PC-9 (cell line): ENCODE measurements at regions of chr6 and their contacts with region 1.

Region 1: DNA sequence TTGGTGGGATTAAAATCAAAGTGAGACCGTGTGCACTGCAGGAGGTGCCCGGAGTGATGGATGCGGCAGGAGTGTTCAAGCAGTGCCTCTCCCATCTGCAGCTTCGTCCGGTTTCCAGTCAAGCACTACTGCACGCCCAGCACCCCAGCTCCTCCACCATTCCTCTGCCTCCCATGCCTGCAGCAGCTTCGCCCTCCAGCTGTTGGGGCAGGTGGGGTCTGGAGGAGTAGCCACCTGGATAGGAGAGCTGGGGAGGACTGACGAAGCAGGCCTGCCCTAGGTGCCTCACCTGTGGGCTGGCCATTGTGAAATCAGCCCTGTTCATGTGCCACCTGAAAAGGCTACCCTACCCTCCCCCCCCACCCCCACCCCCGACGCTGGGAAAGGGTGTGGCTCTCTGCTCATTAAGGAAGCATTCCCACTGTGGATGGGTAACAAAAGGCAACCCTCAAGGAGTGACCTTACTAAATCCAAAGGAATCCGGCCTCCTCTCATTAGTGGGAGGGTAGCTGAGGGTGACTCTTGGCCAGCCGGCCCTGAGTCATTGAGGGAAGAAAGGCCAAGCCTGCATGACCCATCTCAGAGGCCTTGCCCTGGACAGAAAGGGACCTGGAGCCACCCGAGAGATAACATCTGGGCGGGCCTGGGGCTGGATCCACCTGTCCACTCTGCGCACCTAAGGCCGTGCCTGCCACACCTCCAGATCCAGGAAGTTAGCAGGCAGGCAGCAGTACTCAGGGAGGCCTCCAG is 115.9 kb upstream of the ARMC2 start:
- DNase-seq: peak; percentile 96 to 100
- H3K4me3 ChIP-seq: peak overlapping the region; percentile 46; the same call in 1 of the 2 replicates
- H3K27ac ChIP-seq: peak overlapping the region; percentile 99
- H3K4me1 ChIP-seq: peaks cover 71% of the 10 kb centered on the region
- H3K27me3 ChIP-seq: no peaks in the 10 kb centered on the region
- CTCF ChIP-seq: no peak

Region 2: GRCh38 chr6:108565091-108565766 is 167.1 kb before region 1 on chr6:
- CTCF ChIA-PET with region 1: no interaction called
- POLR2A ChIA-PET with region 1: interaction called, 17 read pairs
- intact Hi-C with region 1: no loop called
- DNase-seq: peak in 1 of 2 experiments; percentile 67
- H3K4me3 ChIP-seq: peak overlapping the region; percentile 99
- H3K27ac ChIP-seq: peak overlapping the region; percentile 84
- H3K4me1 ChIP-seq: peaks cover 37% of the 10 kb centered on the region
- H3K27me3 ChIP-seq: no peaks in the 10 kb centered on the region
- CTCF ChIP-seq: no peak

Region 3: GRCh38 chr6:108589287-108589791 is 143.0 kb before region 1 on chr6:
- CTCF ChIA-PET with region 1: interaction called, 14 read pairs
- POLR2A ChIA-PET with region 1: no interaction called
- intact Hi-C with region 1: loop called (anchors 2 kb)
- DNase-seq: peak; percentile 78 to 90
- H3K4me3 ChIP-seq: no peak overlapping the region
- H3K27ac ChIP-seq: peak overlapping the region; percentile 45
- H3K4me1 ChIP-seq: peaks cover 75% of the 10 kb centered on the region
- H3K27me3 ChIP-seq: no peaks in the 10 kb centered on the region
- CTCF ChIP-seq: no peak

Region 4: GRCh38 chr6:108656836-108657235 is 75.5 kb before region 1 on chr6:
- CTCF ChIA-PET with region 1: no interaction called
- POLR2A ChIA-PET with region 1: no interaction called
- intact Hi-C with region 1: no loop called
- DNase-seq: peak in 1 of 2 experiments; percentile 30
- H3K4me3 ChIP-seq: no peak overlapping the region
- H3K27ac ChIP-seq: no peak overlapping the region
- H3K4me1 ChIP-seq: peaks cover 61% of the 10 kb centered on the region
- H3K27me3 ChIP-seq: no peaks in the 10 kb centered on the region
- CTCF ChIP-seq: no peak

Region 5: GRCh38 chr6:108714101-108714765 is 18.1 kb before region 1 on chr6:
- CTCF ChIA-PET with region 1: no interaction called
- POLR2A ChIA-PET with region 1: interaction called, 8 read pairs
- intact Hi-C with region 1: loop called (anchors 2 kb)
- DNase-seq: peak in 1 of 2 experiments; percentile 35
- H3K4me3 ChIP-seq: no peak overlapping the region
- H3K27ac ChIP-seq: no peak overlapping the region
- H3K4me1 ChIP-seq: peaks cover 35% of the 10 kb centered on the region
- H3K27me3 ChIP-seq: no peaks in the 10 kb centered on the region
- CTCF ChIP-seq: no peak

Region 6: GRCh38 chr6:108835218-108835850 is 103.0 kb after region 1 on chr6:
- CTCF ChIA-PET with region 1: interaction called, 4 read pairs
- POLR2A ChIA-PET with region 1: no interaction called
- intact Hi-C with region 1: loop called (anchors 5 kb)
- DNase-seq: peak; percentile 61 to 78
- H3K4me3 ChIP-seq: no peak overlapping the region
- H3K27ac ChIP-seq: no peak overlapping the region
- H3K4me1 ChIP-seq: no peaks in the 10 kb centered on the region
- H3K27me3 ChIP-seq: no peaks in the 10 kb centered on the region
- CTCF ChIP-seq: peak; percentile 95

Region 7: GRCh38 chr6:108983151-108983550 is 250.8 kb after region 1 on chr6:
- CTCF ChIA-PET with region 1: no interaction called
- POLR2A ChIA-PET with region 1: no interaction called
- intact Hi-C with region 1: no loop called
- DNase-seq: no peak
- H3K4me3 ChIP-seq: no peak overlapping the region
- H3K27ac ChIP-seq: no peak overlapping the region
- H3K4me1 ChIP-seq: peaks cover 3% of the 10 kb centered on the region
- H3K27me3 ChIP-seq: no peaks in the 10 kb centered on the region
- CTCF ChIP-seq: no peak

Region 8: DNA sequence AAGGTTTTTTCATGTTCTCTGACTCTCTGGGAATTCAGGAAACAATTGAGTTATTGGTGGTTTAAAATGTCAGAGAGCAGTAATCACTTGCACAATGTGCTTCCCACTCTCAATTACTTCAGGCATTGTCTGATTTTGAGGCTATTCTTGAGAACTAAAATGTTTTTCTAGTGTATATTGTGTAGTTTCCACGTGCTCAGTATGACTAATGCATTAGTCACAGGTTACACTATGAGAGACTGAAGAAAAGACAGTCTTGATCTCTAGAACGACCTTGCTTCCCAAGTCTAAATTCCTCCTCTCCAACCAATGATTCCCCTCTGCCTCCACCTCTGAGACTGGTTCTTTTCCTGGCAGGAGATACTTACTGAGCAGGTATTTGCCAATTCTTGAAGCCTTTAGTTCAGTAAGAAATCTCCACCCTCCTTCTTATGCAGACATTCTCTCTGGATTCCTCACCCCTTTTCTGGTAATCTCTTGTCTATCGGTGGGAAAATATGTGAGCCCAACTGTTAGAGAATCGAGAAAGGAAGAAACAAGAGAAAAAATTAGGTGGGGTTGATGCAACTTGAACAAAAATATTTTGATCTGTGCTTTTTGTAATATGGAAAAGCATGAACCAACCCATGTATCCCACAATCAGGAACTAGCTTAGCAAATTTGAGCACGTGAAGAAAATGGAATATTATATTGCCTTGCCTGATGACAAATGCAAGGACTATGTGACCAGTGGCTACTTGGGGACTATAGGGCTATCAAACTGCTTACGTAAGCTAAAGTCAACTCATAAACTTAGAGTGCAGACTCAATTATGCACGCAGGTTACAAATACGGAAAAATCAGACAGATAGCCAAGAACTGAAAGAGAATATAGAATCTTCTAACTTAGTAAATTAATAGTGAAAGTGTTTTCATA is 1805.2 kb after region 1 on chr6:
- CTCF ChIA-PET with region 1: no interaction called
- POLR2A ChIA-PET with region 1: no interaction called
- intact Hi-C with region 1: no loop called
- DNase-seq: peak; percentile 47 to 97
- H3K4me3 ChIP-seq: no peak overlapping the region
- H3K27ac ChIP-seq: peak overlapping the region; percentile 92
- H3K4me1 ChIP-seq: peaks cover 30% of the 10 kb centered on the region
- H3K27me3 ChIP-seq: no peaks in the 10 kb centered on the region
- CTCF ChIP-seq: no peak